Left cardiac atrium (tissue), 4 donors: ENCODE measurements at regions of chr17 and their contacts with region 1.

Region 1: GRCh38 chr17:52128721-52129120 is 29.8 kb downstream of the CA10 start:
- DNase-seq: no peak
- ATAC-seq: no peak

Region 2: GRCh38 chr17:52064791-52065211 is 63.9 kb before region 1 on chr17:
- intact Hi-C with region 1: loop called in 1 of 2 experiments (anchors 10 kb)
- DNase-seq: no peak
- ATAC-seq: no peak

Region 3: GRCh38 chr17:52202164-52203080 is 73.7 kb after region 1 on chr17:
- intact Hi-C with region 1: no loop called
- DNase-seq: no peak
- ATAC-seq: no peak